Dendritic cell treated with granulocyte-macrophage colony-stimulating factor and Interleukin-4, amounts not matched to agents 40 ng/mL and 50 ng/mL, for 4 days (primary cell): ENCODE measurements at regions of chr22 and their contacts with region 1.

Region 1: DNA sequence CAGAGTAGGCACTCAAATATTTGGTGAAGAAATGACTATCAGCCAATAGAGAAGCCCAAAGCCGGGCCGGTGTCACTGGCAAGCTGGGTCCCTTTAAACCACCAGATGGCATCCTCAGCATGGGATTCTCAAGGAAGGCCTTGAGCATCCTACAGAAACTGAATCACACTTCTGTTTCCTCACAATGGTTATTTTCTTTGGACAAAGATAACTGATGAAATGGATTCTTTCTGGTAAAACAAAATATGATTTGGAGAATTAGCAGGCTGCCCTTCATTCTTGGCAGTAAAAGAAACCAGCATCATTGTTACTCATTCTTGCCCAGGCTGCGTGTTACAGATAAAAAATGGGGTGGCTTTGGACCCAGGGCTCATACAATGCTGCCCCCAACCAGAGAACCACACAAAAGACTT is 30.3 kb upstream of the ASPHD2 start:
- H3K4me3 Mint-ChIP-seq: no peak overlapping the region
- H3K27ac Mint-ChIP-seq: no peak overlapping the region
- H3K4me1 Mint-ChIP-seq: peaks cover 18% of the 10 kb centered on the region
- H3K27me3 Mint-ChIP-seq: peaks cover 1% of the 10 kb centered on the region

Region 2: DNA sequence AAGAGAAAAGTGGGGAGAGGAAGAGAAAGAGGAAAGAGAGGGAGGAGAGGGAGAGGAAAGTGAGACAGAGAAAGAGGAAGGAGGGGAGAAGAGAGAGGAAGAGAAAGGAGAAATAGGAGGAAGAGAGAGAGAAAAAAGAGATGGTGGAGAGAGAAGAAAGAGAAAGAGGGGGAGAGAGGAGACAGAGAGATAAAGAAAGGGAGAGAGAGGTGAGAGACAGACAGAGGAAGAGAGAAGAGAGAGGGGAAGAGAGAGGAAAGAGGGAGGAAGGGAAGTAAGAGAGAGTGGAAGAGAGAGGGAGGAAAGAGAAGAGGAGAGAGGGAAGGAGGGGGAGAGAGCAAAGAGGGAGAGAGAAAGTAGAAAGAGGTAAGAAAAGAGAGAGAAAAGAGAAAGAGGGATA is 238.9 kb before region 1 on chr22:
- intact Hi-C with region 1: no loop called
- H3K4me3 Mint-ChIP-seq: no peak overlapping the region
- H3K27ac Mint-ChIP-seq: no peak overlapping the region
- H3K4me1 Mint-ChIP-seq: peaks cover 12% of the 10 kb centered on the region
- H3K27me3 Mint-ChIP-seq: peaks cover 30% of the 10 kb centered on the region

Region 3: DNA sequence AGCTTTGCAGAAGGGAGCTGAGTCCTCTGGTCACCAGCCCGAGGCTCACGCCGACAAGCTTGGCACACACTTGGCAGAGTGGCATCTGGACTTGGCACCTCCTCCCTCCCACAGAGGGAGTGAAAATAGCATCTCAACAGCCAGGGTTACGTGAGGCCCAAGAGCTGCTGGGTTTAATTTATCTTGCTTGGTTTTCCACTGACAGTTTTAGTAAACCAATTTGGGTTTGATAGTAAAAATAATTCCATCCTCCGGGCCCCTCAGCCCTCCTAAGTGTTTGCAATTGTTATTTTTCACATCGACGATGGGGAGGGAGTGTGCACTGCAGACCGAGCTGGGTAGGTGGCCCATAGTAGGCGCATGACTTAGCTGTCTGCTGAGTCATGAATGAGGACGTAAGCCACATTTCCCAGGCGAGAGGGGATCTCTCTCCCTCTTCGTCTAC is 77.3 kb before region 1 on chr22:
- intact Hi-C with region 1: no loop called
- H3K4me3 Mint-ChIP-seq: no peak overlapping the region
- H3K27ac Mint-ChIP-seq: no peak overlapping the region
- H3K4me1 Mint-ChIP-seq: no peaks in the 10 kb centered on the region
- H3K27me3 Mint-ChIP-seq: peaks cover 3% of the 10 kb centered on the region

Region 4: DNA sequence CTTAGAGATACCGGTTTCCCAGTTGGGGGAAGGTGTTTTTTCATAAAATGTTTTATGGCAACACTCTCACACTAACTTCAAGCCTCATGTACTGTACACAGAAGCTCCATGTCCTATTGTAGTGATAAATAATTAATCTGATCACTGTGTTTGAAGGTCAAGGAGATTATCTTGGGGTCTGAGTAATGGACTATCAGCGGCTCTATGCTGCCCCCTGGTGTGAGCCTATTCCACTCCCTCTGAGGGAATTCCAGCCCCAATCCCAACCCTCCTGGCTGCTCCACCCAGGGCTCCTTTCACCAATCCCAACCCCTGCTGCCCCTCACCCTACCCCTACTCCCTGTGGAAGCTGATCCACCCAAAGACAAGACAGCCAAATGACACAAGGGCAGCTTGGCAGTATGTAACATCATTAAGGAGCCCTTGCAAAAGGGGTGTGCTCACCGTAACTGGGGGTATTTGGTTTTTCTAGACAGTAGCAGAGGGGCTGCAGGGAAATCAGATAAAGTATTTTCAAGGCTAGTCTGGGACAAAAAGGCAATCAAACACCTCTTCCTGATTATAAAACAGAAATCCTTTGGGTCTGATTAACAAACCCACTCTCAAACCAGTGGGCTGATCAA is 62.6 kb after region 1 on chr22:
- intact Hi-C with region 1: loop called (anchors 1 kb)
- H3K4me3 Mint-ChIP-seq: no peak overlapping the region
- H3K27ac Mint-ChIP-seq: no peak overlapping the region
- H3K4me1 Mint-ChIP-seq: peaks cover 5% of the 10 kb centered on the region
- H3K27me3 Mint-ChIP-seq: no peaks in the 10 kb centered on the region